Psoas muscle (tissue), 8 donors: ENCODE measurements at regions of chr14 and their contacts with region 1.

Region 1: GRCh38 chr14:68816262-68816942 is 23.5 kb upstream of the ZFP36L1 start:
- DNase-seq: peak; percentile 91 to 95
- ATAC-seq: peak; percentile 91 to 93 (median 93)
- H3K4me3 ChIP-seq: peak overlapping the region; percentile 72
- H3K27ac ChIP-seq: peak overlapping the region; percentile 99
- H3K4me1 ChIP-seq: peaks cover 23% of the 10 kb centered on the region
- H3K27me3 ChIP-seq: no peaks in the 10 kb centered on the region
- CTCF ChIP-seq: peak; percentile 98

Region 2: GRCh38 chr14:67934008-67934481 is 882.4 kb before region 1 on chr14:
- intact Hi-C with region 1: loop called (anchors 2 to 5 kb)
- DNase-seq: no peak
- ATAC-seq: peak; percentile 79 to 93 (median 86)
- H3K4me3 ChIP-seq: no peak overlapping the region
- H3K27ac ChIP-seq: peak overlapping the region; percentile 34
- H3K4me1 ChIP-seq: peaks cover 7% of the 10 kb centered on the region
- H3K27me3 ChIP-seq: no peaks in the 10 kb centered on the region
- CTCF ChIP-seq: peak; percentile 78

Region 3: GRCh38 chr14:68084256-68084655 is 732.1 kb before region 1 on chr14:
- intact Hi-C with region 1: loop called in 1 of 2 experiments (anchors 5 kb)
- DNase-seq: no peak
- ATAC-seq: peak in 2 of 4 donors; percentile 55 to 63
- H3K4me3 ChIP-seq: no peak overlapping the region
- H3K27ac ChIP-seq: no peak overlapping the region
- H3K4me1 ChIP-seq: peaks cover 9% of the 10 kb centered on the region
- H3K27me3 ChIP-seq: no peaks in the 10 kb centered on the region
- CTCF ChIP-seq: peak; percentile 20

Region 4: GRCh38 chr14:68248481-68249255 is 567.7 kb before region 1 on chr14:
- intact Hi-C with region 1: loop called (anchors 1 to 2 kb)
- DNase-seq: peak; percentile 49 to 79
- ATAC-seq: peak; percentile 87 to 92 (median 88)
- H3K4me3 ChIP-seq: no peak overlapping the region
- H3K27ac ChIP-seq: peak overlapping the region; percentile 89
- H3K4me1 ChIP-seq: peaks cover 75% of the 10 kb centered on the region
- H3K27me3 ChIP-seq: no peaks in the 10 kb centered on the region
- CTCF ChIP-seq: peak; percentile 69

Region 5: GRCh38 chr14:68795597-68796417 is 20.6 kb before region 1 on chr14:
- intact Hi-C with region 1: loop called (anchors 1 to 2 kb)
- DNase-seq: peak; percentile 85 to 93
- ATAC-seq: peak; percentile 59 to 64 (median 62)
- H3K4me3 ChIP-seq: peak overlapping the region; percentile 91
- H3K27ac ChIP-seq: peak overlapping the region; percentile 100
- H3K4me1 ChIP-seq: no peaks in the 10 kb centered on the region
- H3K27me3 ChIP-seq: no peaks in the 10 kb centered on the region
- CTCF ChIP-seq: peak; percentile 80